ENCODE measurements at regions of chr4 and their contacts with region 1.

Region 1: DNA sequence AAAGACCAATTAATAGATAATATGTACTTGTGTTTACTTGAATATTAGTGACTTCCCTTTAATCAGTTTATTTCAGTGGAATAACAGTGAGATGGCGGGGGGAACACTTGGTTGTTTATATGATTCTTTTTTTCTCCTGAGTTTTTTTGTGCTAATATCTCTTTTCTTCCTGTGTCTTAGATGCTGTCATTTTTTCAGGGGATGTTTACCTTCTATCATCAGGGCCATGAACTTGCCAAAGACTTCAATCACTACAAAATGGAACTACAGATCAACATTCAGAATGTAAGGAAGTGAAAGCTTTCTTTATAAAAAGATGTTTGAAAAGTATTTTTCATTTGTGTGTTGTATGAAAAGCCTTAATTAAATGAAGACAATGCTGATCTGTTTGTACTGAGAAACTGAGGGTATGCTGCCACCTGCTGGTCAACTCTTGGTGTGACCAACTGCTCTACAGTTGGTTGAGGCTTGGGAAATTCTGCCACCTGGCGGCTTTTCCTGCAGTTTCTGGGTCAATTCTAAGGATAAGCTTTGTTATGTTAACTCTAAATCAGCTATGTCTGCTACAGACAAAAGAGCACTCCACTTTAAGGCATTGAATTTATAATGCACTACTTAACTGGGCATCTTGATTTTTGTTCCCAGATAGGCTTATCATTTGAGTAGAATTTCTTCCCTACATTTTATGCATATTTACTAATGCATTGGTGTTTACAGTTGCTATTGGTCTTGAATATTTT is 134.8 kb downstream of the ARHGAP10 start:
- DNase-seq: peak; percentile 38
- H3K4me3 ChIP-seq: no peak overlapping the region
- H3K27me3 ChIP-seq: no peaks in the 10 kb centered on the region
- CTCF ChIP-seq: peak; percentile 96

Region 2: GRCh38 chr4:147550626-147551250 is 316.0 kb before region 1 on chr4:
- CTCF ChIA-PET with region 1: no interaction called
- POLR2A ChIA-PET with region 1: no interaction called
- DNase-seq: peak; percentile 41
- H3K4me3 ChIP-seq: no peak overlapping the region; the same call in 1 of the 2 replicates
- H3K27me3 ChIP-seq: no peaks in the 10 kb centered on the region
- CTCF ChIP-seq: no peak

Region 3: GRCh38 chr4:147596981-147597380 is 269.7 kb before region 1 on chr4:
- CTCF ChIA-PET with region 1: interaction called, 65 read pairs
- POLR2A ChIA-PET with region 1: no interaction called
- DNase-seq: peak; percentile 67
- H3K4me3 ChIP-seq: no peak overlapping the region
- H3K27me3 ChIP-seq: no peaks in the 10 kb centered on the region
- CTCF ChIP-seq: no peak

Region 4: DNA sequence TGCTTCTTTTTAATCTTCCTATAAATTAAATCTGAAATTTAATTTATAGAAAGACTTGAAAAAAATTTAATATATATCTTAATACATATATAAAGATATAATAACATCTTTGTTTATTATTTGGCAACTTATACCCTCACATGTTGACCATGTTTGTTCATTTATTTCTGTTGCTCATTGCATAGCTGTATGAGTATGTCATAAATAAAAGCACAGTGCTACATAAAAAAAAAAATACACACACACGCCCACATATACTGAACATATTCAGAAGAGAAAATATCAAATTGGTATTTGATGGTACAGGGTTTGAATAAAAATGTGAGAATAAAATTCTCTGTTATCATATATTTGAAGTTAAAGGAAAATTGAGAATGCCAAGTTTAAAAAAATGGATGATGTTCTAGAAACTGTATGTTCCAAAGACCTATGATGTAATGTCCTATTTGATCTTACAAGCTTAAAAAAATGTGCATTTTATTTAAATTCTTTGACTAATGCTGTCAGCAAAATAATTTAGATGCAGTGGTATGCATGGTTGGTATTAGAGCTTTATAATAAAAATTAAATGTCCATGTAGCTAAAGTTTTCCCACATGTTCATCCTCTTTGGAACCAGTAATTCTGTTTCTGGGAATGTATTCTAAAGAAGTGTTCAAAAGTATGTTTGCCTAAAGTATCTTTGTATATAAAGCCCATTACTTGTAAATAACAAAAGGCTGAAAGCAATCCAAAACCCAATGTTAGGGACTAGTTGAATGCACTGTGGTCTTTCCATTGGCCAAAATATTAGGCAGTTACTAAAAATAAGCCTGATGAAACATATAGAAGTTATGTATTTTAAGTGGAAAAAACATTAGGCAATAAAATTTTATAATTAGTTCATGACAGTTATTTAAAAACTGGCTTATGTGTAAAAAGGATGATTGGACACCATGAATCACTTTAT is 236.6 kb before region 1 on chr4:
- CTCF ChIA-PET with region 1: interaction called, 12 read pairs
- POLR2A ChIA-PET with region 1: no interaction called
- DNase-seq: no peak
- H3K4me3 ChIP-seq: no peak overlapping the region
- H3K27me3 ChIP-seq: no peaks in the 10 kb centered on the region
- CTCF ChIP-seq: no peak

Region 5: GRCh38 chr4:147696863-147697262 is 169.8 kb before region 1 on chr4:
- CTCF ChIA-PET with region 1: interaction called, 169 read pairs
- POLR2A ChIA-PET with region 1: no interaction called
- DNase-seq: no peak
- H3K4me3 ChIP-seq: no peak overlapping the region
- H3K27me3 ChIP-seq: peaks cover 1% of the 10 kb centered on the region; the same call in 1 of the 2 replicates
- CTCF ChIP-seq: no peak

Region 6: GRCh38 chr4:147731580-147732517 is 134.9 kb before region 1 on chr4 and contains the start of gene ARHGAP10:
- CTCF ChIA-PET with region 1: interaction called, 38 read pairs
- POLR2A ChIA-PET with region 1: no interaction called
- DNase-seq: no peak
- H3K4me3 ChIP-seq: peak within 1 kb of the TSS; percentile 62
- H3K27me3 ChIP-seq: no peaks in the 10 kb centered on the region
- CTCF ChIP-seq: no peak
- polyA plus RNA-seq, gene ARHGAP10: 17.6 and 20.2 TPM in 2 replicates

Region 7: DNA sequence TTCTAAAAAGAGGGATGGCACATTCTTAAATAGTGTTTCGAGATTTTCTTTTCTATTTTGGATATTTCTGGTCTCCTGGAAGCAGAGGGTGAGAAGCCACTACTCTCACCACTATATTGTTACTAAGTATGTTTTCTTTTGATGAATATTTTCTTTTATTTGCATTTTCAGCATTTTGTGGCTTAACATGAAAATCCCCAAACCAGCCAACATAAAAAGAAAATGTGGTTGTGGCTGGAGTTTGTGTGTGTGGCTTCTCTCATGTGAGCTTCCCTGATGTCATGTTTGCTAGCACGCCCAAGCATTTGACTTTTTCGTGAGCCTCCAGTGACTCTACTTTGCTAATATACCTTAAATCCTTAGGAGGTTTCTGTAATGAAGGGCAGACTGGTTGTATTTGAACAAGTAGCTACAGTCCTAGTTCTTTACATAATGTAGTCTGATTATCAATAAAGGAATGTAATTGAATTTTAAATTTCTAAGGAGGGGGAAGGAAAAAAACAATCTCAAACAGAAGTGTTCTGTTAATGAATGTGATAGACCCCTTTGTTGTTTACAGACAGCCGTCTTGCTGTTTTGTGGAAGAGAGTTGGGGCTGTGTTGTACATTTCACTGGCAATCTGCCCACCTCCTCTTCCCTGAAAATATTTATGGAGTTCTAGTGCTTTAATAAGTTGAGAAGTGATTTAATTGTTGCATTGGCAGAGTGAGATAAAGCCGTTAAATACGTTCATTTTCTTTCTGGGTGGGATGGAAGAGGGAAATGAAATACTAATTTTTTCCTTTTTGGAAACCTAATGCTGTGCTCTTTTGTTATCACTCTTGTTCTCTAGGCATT is 20.2 kb before region 1 on chr4:
- CTCF ChIA-PET with region 1: interaction called, 15 read pairs
- POLR2A ChIA-PET with region 1: no interaction called
- DNase-seq: no peak
- H3K4me3 ChIP-seq: no peak overlapping the region
- H3K27me3 ChIP-seq: no peaks in the 10 kb centered on the region
- CTCF ChIP-seq: no peak